Ascending aorta (tissue), 2 donors: ENCODE measurements at regions of chr2 and their contacts with region 1.

Region 1: GRCh38 chr2:200735061-200735460 is 76.6 kb upstream of the BZW1 start:
- DNase-seq: no peak
- H3K4me3 ChIP-seq: no peak overlapping the region
- H3K27ac ChIP-seq: no peak overlapping the region
- H3K4me1 ChIP-seq: peaks cover 0 to 3% of the 10 kb centered on the region in 2 donors
- H3K27me3 ChIP-seq: no peaks in the 10 kb centered on the region
- CTCF ChIP-seq: no peak

Region 2: GRCh38 chr2:200713003-200713703 is 21.9 kb before region 1 on chr2:
- intact Hi-C with region 1: loop called (anchors 1 kb)
- DNase-seq: peak; percentile 81 to 95
- H3K4me3 ChIP-seq: peak overlapping the region; percentile 37 to 48
- H3K27ac ChIP-seq: peak overlapping the region; percentile 70 to 85
- H3K4me1 ChIP-seq: peaks cover 3% of the 10 kb centered on the region in 2 donors
- H3K27me3 ChIP-seq: no peaks in the 10 kb centered on the region
- CTCF ChIP-seq: peak; percentile 74 to 90 (median 82)

Region 3: GRCh38 chr2:201171259-201171814 is 436.3 kb after region 1 on chr2:
- intact Hi-C with region 1: no loop called
- DNase-seq: no peak
- H3K4me3 ChIP-seq: no peak overlapping the region
- H3K27ac ChIP-seq: no peak overlapping the region
- H3K4me1 ChIP-seq: no peaks in the 10 kb centered on the region
- H3K27me3 ChIP-seq: no peaks in the 10 kb centered on the region
- CTCF ChIP-seq: no peak

Region 4: DNA sequence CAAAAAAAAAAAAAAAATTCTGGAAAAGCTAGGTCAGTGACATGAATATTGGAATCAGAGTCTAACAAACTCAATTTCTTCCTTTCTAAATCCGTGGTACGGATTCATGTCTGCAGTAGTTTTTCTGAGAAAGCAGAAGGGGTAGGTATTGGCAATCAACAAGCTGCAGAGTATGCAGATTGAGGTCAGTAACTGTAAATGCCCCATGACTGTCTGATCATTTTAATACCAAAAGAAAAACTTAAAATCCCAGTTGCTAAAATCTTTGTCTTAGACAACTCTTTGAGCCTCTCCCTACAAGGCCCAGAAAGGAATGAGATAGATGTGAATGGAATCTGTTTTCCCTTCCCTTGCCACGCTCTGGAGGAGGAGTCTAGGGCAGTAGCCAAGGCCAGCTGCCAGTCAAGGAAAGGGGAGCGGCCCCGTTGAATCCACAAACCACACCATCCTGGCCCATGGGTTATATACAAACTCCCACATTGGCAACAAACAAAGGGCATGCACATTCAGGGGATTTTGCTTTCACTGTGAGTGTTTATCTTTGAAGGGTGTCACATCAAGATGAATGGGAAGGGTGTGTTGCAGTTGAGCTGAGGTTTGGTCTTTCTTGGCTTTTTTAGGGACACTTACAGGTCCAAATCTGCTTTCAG is 519.1 kb after region 1 on chr2:
- intact Hi-C with region 1: no loop called
- DNase-seq: no peak
- H3K4me3 ChIP-seq: no peak overlapping the region
- H3K27ac ChIP-seq: no peak overlapping the region
- H3K4me1 ChIP-seq: peaks cover 0 to 5% of the 10 kb centered on the region in 2 donors
- H3K27me3 ChIP-seq: no peaks in the 10 kb centered on the region
- CTCF ChIP-seq: no peak